ENCODE measurements at regions of chr13 and their contacts with region 1.

Region 1: GRCh38 chr13:39602614-39603366 is at the start of gene LHFPL6:
- DNase-seq: peak; percentile 63
- ATAC-seq: peak; percentile 93
- H3K4me3 ChIP-seq: peak within 1 kb of the TSS; percentile 94
- H3K27ac ChIP-seq: peak within 1 kb of the TSS; percentile 23; the same call in 1 of the 2 replicates
- H3K4me1 ChIP-seq: peaks cover 3% of the 10 kb centered on the region; the same call in 1 of the 2 replicates
- H3K27me3 ChIP-seq: no peaks in the 10 kb centered on the region
- CTCF ChIP-seq: peak; percentile 49
- total RNA-seq, gene LHFPL6: 7.8 TPM in 2 replicates

Region 2: GRCh38 chr13:39415008-39415802 is 187.6 kb before region 1 on chr13:
- CTCF ChIA-PET with region 1: no interaction called
- POLR2A ChIA-PET with region 1: interaction called, 11 read pairs
- intact Hi-C with region 1: loop called (anchors 1 kb)
- DNase-seq: peak; percentile 44
- ATAC-seq: peak; percentile 81
- H3K4me3 ChIP-seq: no peak overlapping the region
- H3K27ac ChIP-seq: no peak overlapping the region
- H3K4me1 ChIP-seq: peaks cover 7% of the 10 kb centered on the region; the same call in 1 of the 2 replicates
- H3K27me3 ChIP-seq: no peaks in the 10 kb centered on the region
- CTCF ChIP-seq: peak; percentile 66

Region 3: GRCh38 chr13:39496440-39497010 is 106.3 kb before region 1 on chr13:
- CTCF ChIA-PET with region 1: interaction called, 3 read pairs
- POLR2A ChIA-PET with region 1: no interaction called
- intact Hi-C with region 1: loop called (anchors 2 kb)
- DNase-seq: no peak
- ATAC-seq: no peak
- H3K4me3 ChIP-seq: no peak overlapping the region
- H3K27ac ChIP-seq: no peak overlapping the region
- H3K4me1 ChIP-seq: no peaks in the 10 kb centered on the region
- H3K27me3 ChIP-seq: no peaks in the 10 kb centered on the region
- CTCF ChIP-seq: no peak

Region 4: DNA sequence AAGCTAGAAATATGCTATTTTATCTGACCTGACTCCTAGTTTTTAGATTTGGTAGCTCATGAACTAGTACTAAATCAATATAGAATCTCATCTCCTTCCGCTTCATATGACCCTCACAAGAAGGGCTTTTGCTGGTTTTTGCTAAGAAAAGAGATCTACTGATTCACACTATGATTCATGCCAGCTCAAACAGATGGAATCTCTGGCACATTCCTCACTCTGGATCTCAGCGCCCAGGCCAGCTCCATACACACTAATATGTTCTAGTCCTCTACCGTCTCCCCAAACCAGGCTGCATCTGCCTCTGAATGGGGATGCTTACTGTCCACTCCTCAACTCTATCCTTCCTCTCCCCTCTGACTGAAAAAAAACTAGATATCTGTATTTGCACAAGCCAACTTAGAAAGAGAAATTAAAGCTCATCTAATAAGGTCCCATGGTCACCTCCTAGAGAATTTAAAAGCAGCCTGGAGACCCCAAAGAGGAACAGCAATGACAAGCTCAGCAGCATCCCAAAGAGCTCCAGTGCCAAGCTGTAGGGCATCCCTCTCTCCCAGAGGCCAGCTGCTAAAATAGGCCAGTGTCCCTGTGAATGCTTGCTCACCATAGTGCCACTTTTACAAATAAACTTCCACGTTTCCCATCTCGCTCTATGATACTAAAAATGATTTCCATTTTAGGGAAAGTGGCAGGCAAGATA is 74.7 kb before region 1 on chr13:
- CTCF ChIA-PET with region 1: no interaction called
- POLR2A ChIA-PET with region 1: no interaction called
- intact Hi-C with region 1: loop called (anchors 5 kb)
- DNase-seq: peak; percentile 88
- ATAC-seq: peak; percentile 94
- H3K4me3 ChIP-seq: no peak overlapping the region
- H3K27ac ChIP-seq: peak overlapping the region; percentile 67
- H3K4me1 ChIP-seq: peaks cover 40% of the 10 kb centered on the region
- H3K27me3 ChIP-seq: no peaks in the 10 kb centered on the region
- CTCF ChIP-seq: no peak

Region 5: DNA sequence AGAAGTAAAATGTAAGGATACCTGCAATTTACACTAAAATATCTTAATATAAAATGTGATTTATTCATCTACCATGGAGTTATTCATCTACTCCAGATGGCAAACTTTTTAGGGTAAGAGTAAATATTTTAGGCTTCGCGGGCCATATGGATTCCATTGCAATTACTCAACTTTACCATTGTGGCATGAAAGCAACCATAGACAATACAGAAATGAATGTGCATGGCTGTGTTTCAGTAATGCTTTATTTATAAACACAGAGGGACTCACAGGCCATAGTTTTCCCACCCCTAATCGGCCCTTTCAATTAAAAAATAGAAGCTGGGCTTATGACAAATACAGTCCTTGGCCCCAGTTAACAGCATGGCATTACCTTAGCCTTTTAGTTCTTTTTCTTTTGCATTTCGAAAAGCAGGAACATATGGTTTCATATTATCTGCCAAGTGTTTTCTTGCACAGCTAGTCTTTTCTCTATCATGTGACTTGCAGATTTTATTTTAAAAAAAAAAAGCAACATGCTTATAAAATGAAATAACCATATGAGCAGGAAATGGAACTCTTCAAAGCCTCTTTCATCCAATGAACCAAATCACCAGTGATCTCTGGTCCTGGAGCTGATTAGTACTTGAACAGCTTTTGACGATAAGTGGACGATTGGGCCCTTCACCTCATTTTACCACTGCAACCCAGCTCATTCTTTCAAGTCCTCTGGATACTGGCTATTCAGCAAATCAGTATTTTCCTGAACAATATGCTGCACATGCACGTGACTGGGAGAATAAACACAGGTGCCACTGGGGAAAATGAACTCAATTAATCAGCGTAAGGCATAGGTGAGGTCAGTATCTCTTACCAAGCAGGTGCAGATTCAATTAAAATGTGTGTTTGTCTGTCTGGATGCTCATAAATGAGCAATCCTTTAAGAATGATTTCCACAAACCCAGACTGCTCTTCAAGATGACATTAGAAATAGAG is 63.7 kb before region 1 on chr13:
- CTCF ChIA-PET with region 1: no interaction called
- POLR2A ChIA-PET with region 1: no interaction called
- intact Hi-C with region 1: loop called (anchors 2 kb)
- DNase-seq: peak; percentile 42
- ATAC-seq: no peak
- H3K4me3 ChIP-seq: no peak overlapping the region
- H3K27ac ChIP-seq: no peak overlapping the region
- H3K4me1 ChIP-seq: peaks cover 16% of the 10 kb centered on the region; the same call in 1 of the 2 replicates
- H3K27me3 ChIP-seq: no peaks in the 10 kb centered on the region
- CTCF ChIP-seq: no peak

Region 6: GRCh38 chr13:39565036-39565949 is 37.5 kb before region 1 on chr13:
- CTCF ChIA-PET with region 1: interaction called, 4 read pairs
- POLR2A ChIA-PET with region 1: no interaction called
- intact Hi-C with region 1: loop called (anchors 1 kb)
- DNase-seq: peak; percentile 82
- ATAC-seq: peak; percentile 88
- H3K4me3 ChIP-seq: peak overlapping the region; percentile 48
- H3K27ac ChIP-seq: peak overlapping the region; percentile 69
- H3K4me1 ChIP-seq: peaks cover 44% of the 10 kb centered on the region
- H3K27me3 ChIP-seq: no peaks in the 10 kb centered on the region
- CTCF ChIP-seq: no peak

Region 7: DNA sequence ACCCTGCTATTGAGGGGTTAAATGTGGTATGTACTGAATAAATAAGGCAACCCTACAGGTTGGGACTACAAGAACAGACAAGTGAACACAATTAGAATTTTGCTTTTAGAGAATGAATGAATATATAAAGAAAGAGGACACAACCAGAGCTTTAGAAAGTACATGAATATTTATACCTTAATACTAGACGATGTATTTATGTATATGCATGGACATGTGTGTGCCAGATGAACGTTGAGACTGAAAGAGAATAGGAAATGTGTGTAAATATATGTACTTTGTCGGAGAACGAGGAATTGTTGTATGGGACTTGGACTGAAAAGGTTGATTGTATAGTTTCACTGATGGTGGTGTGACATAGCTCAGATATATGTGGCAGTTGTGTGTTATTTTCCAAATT is 43.3 kb after region 1 on chr13:
- CTCF ChIA-PET with region 1: no interaction called
- POLR2A ChIA-PET with region 1: no interaction called
- intact Hi-C with region 1: no loop called
- DNase-seq: no peak
- ATAC-seq: no peak
- H3K4me3 ChIP-seq: no peak overlapping the region
- H3K27ac ChIP-seq: no peak overlapping the region
- H3K4me1 ChIP-seq: no peaks in the 10 kb centered on the region
- H3K27me3 ChIP-seq: 0 out of 2 replicates have a peak, but pooled peaks cover 2% of the 10 kb centered on the region
- CTCF ChIP-seq: no peak

Measured in PC-3 (cell line).